ENCODE measurements at regions of chr13 and their contacts with region 1.

Region 1: DNA sequence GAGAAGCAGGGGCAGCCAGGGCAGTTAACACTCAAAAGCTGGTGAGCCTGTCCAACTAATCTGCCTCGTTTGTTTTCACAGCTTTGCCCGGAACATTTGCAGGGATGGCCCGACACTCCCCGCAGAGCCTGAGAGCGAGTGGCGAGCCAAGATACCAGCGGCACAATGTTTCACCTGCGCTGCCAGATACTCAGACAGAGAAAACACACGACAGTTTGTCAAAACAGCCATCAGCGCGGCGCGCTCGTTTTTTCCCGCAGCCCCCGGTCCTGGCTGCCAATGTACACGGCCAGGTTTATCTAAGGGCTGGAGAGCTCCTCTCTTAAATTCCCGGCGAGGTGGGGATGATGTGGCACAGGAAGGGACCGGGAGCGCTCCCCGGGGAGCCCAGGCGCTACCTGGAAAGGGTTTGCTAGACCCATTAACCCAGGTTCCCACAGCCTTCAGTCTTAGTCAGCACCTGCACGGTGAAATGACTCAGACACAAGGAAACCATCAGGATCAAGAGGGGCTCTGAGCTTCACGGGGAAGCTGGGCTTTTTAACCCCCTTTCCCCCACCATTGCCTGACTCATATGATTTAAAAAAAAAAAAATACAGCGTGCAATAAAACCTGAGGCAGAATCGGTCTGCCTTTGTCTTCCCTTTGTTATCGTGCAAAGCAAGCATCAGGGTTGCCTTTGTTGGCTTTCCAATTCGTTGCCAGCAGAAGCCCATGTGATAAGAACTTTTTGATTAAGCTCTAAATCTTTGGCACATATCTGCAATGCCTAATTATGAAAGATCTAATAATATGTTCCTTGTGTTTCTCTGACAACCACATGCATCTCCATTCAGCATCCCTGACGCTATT is 186.2 kb downstream of the EFNB2 start:
- DNase-seq: peak; percentile 51 to 52
- H3K4me3 ChIP-seq: peak overlapping the region; percentile 41
- H3K4me3 Mint-ChIP-seq: peak overlapping the region; percentile 82
- H3K27ac Mint-ChIP-seq: peak overlapping the region; percentile 57
- H3K4me1 ChIP-seq: peaks cover 18% of the 10 kb centered on the region
- H3K4me1 Mint-ChIP-seq: peaks cover 27% of the 10 kb centered on the region
- H3K27me3 ChIP-seq: no peaks in the 10 kb centered on the region
- H3K27me3 Mint-ChIP-seq: no peaks in the 10 kb centered on the region
- CTCF ChIP-seq: no peak

Region 2: GRCh38 chr13:106381091-106381490 is 31.8 kb after region 1 on chr13:
- CTCF ChIA-PET with region 1: no interaction called
- POLR2A ChIA-PET with region 1: no interaction called
- intact Hi-C with region 1: loop called (anchors 1 kb)
- DNase-seq: peak; percentile 76 to 82
- H3K4me3 ChIP-seq: no peak overlapping the region
- H3K4me3 Mint-ChIP-seq: peak overlapping the region; percentile 26
- H3K27ac Mint-ChIP-seq: peak overlapping the region; percentile 47
- H3K4me1 ChIP-seq: peaks cover 37% of the 10 kb centered on the region
- H3K4me1 Mint-ChIP-seq: peaks cover 30% of the 10 kb centered on the region
- H3K27me3 ChIP-seq: no peaks in the 10 kb centered on the region
- H3K27me3 Mint-ChIP-seq: no peaks in the 10 kb centered on the region
- CTCF ChIP-seq: no peak

Region 3: DNA sequence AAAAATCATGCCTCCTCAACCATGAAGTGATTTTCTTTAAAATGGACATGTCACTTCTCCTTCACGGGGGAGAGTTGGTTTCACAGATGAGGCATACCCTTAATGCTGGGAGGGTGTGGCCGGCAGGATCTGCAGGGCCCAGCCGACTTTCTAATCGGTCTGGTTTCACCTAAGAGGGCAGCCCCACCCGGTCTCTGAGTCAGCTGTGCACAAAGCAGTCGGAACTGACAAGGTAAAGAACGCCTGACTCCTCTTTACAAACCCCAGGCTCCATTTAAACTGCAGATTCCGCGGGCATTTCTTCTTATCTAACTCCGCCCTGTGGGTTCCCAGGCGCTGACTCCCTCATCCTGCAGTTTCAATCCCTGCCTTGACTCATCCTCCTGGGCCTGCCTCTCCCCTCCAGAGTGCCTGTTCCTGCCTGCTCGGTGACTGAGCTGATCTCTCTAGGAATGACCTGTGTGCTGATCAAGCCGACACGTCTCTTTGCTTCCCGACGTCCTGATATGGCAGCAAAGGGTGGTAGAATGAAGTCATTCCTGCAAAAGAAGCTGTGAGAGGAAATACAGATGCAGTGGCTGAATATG is 122.7 kb after region 1 on chr13:
- CTCF ChIA-PET with region 1: no interaction called
- POLR2A ChIA-PET with region 1: no interaction called
- intact Hi-C with region 1: loop called (anchors 5 kb)
- DNase-seq: peak; percentile 81 to 93
- H3K4me3 ChIP-seq: peak overlapping the region; percentile 27
- H3K4me3 Mint-ChIP-seq: peak overlapping the region; percentile 71
- H3K27ac Mint-ChIP-seq: peak overlapping the region; percentile 84
- H3K4me1 ChIP-seq: peaks cover 69% of the 10 kb centered on the region
- H3K4me1 Mint-ChIP-seq: peaks cover 48% of the 10 kb centered on the region
- H3K27me3 ChIP-seq: no peaks in the 10 kb centered on the region
- H3K27me3 Mint-ChIP-seq: no peaks in the 10 kb centered on the region
- CTCF ChIP-seq: no peak

Region 4: DNA sequence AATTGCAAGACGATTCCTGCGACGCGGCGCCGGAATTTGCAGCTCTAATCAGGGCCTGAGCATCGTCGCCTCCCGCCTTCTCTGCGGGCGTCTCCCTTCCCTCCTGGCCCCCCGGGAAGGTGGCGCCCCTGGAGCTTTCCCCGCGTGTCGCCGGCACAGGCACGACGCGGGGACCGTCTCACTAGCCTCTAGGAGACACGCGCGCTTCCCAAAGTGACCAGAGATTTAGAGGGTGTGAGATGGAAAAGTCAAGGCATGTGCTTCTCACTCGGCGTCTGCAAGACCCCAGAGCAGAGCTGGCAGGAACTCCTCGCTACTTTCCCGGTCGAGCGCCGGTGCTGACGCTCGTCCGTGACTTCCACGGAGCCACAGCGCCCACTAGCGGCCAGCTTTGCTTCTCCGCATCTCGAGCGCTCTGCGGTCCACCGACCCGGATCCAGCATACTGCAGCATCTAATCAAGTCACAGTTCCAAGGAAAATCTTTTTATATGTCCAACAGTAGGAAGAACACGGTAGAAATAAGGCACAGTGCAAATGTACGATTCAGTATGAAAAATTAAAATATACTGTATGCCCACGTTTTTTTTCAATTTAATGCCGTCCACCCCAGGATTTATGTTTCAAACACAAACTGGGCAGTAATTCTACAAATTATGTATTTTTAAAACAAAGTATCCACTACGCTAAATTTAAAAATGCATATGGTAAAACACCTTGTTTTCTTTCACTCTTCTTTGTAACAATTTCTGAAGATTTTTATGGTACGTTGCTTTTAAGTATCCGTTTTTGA is 187.1 kb after region 1 on chr13:
- CTCF ChIA-PET with region 1: no interaction called
- POLR2A ChIA-PET with region 1: no interaction called
- intact Hi-C with region 1: no loop called
- DNase-seq: peak; percentile 88 to 93
- H3K4me3 ChIP-seq: peak overlapping the region; percentile 93
- H3K4me3 Mint-ChIP-seq: peak overlapping the region; percentile 97
- H3K27ac Mint-ChIP-seq: peak overlapping the region; percentile 94
- H3K4me1 ChIP-seq: peaks cover 7% of the 10 kb centered on the region
- H3K4me1 Mint-ChIP-seq: peaks cover 7% of the 10 kb centered on the region
- H3K27me3 ChIP-seq: no peaks in the 10 kb centered on the region
- H3K27me3 Mint-ChIP-seq: no peaks in the 10 kb centered on the region
- CTCF ChIP-seq: peak; percentile 93 to 98

Region 5: GRCh38 chr13:106640515-106640914 is 291.2 kb after region 1 on chr13:
- CTCF ChIA-PET with region 1: no interaction called
- POLR2A ChIA-PET with region 1: no interaction called
- intact Hi-C with region 1: no loop called
- DNase-seq: no peak
- H3K4me3 ChIP-seq: no peak overlapping the region
- H3K4me3 Mint-ChIP-seq: no peak overlapping the region
- H3K27ac Mint-ChIP-seq: no peak overlapping the region
- H3K4me1 ChIP-seq: no peaks in the 10 kb centered on the region
- H3K4me1 Mint-ChIP-seq: no peaks in the 10 kb centered on the region
- H3K27me3 ChIP-seq: no peaks in the 10 kb centered on the region
- H3K27me3 Mint-ChIP-seq: no peaks in the 10 kb centered on the region
- CTCF ChIP-seq: no peak